ENCODE measurements at regions of chr10 and their contacts with region 1.

Region 1: GRCh38 chr10:80509403-80510161 is 28.1 kb upstream of the SH2D4B start:
- DNase-seq: no peak
- H3K4me3 ChIP-seq: no peak overlapping the region
- H3K27ac ChIP-seq: no peak overlapping the region
- H3K4me1 ChIP-seq: peaks cover 34% of the 10 kb centered on the region
- H3K27me3 ChIP-seq: no peaks in the 10 kb centered on the region
- CTCF ChIP-seq: no peak

Region 2: DNA sequence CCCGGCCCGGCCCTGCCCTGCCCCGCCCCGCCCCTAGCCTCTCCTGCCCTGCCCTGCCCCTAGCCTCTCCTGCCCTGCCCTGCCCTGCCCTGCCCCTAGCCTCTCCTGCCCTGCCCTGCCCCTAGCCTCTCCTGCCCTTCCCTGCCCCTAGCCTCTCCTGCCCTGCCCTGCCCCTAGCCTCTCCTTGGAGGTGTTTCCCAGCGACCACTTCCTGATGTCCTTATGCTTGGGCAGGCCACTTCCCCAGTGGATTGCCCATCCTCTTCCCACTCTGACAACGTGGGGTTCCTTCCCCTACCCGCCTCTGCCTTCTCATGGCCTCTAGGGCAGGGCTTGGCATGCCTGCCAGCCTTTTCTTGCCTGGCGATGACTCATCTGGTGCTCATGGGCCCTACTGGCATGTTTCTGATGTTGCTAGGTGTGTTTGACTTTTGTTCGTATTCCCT is 80.0 kb before region 1 on chr10:
- CTCF ChIA-PET with region 1: no interaction called
- dilution Hi-C with region 1: loop called (anchors 5 kb)
- in situ Hi-C with region 1: no loop called
- intact Hi-C with region 1: no loop called
- DNase-seq: peak; percentile 92
- H3K4me3 ChIP-seq: no peak overlapping the region
- H3K27ac ChIP-seq: peak overlapping the region; percentile 65
- H3K4me1 ChIP-seq: peaks cover 14% of the 10 kb centered on the region
- H3K27me3 ChIP-seq: no peaks in the 10 kb centered on the region
- CTCF ChIP-seq: peak in 1 of 2 donors; percentile 18

Region 3: DNA sequence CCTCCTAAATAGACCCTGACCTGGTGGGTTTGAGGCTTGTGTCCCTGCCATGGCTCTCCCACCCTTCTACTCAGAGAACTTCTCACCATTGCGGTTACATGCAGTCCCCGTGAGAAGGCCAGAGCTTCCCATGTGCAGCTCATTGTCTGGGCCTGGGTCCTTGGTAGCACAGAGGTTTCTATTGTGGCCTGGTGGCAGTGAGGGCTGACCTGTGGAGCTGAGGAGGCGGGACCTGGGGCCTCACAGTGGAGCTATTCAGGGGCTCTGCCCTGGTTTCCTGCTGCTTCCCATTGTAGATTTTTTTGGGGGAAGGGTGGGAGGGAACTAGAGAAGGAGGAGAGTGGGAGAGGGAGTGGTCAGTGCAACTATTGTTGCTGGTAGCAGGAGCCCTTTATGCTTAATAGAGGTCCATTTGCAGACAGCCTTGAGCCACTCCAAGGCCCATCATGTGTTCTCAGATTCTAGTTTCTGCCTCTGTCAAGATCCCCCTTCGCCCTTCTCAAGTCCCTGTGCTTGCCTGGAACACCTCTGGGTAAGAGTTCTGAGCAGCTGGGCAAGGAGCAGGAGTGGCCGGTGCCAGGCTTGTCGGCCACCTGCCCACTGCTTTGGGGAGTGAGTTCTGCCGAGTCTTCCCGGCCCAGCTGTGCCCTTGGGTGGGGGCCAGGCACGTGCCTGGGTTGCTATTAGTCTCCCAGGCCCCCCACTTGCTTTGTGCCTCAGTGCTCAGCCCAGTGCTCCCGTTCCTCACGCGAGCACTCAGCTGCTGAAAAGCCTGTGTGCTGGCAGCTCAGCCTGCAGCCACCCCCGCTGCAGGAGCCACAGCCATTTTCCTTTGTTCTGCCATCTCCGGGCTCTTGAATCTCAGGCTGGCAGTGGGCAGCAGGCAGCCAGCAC is 44.8 kb before region 1 on chr10:
- CTCF ChIA-PET with region 1: interaction called, 13 read pairs
- dilution Hi-C with region 1: loop called (anchors 5 kb)
- in situ Hi-C with region 1: no loop called
- intact Hi-C with region 1: no loop called
- DNase-seq: no peak
- H3K4me3 ChIP-seq: peak overlapping the region in 1 of 3 experiments; percentile 17
- H3K27ac ChIP-seq: peak overlapping the region; percentile 17
- H3K4me1 ChIP-seq: peaks cover 87% of the 10 kb centered on the region
- H3K27me3 ChIP-seq: no peaks in the 10 kb centered on the region
- CTCF ChIP-seq: no peak

Region 4: GRCh38 chr10:80552151-80552646 is 42.6 kb after region 1 on chr10:
- CTCF ChIA-PET with region 1: no interaction called
- dilution Hi-C with region 1: loop called (anchors 5 kb)
- in situ Hi-C with region 1: no loop called
- intact Hi-C with region 1: no loop called
- DNase-seq: no peak
- H3K4me3 ChIP-seq: no peak overlapping the region
- H3K27ac ChIP-seq: no peak overlapping the region
- H3K4me1 ChIP-seq: no peaks in the 10 kb centered on the region
- H3K27me3 ChIP-seq: no peaks in the 10 kb centered on the region
- CTCF ChIP-seq: no peak

Region 5: GRCh38 chr10:80908611-80909010 is 399.0 kb after region 1 on chr10:
- CTCF ChIA-PET with region 1: no interaction called
- dilution Hi-C with region 1: no loop called
- in situ Hi-C with region 1: no loop called
- intact Hi-C with region 1: no loop called
- DNase-seq: no peak
- H3K4me3 ChIP-seq: no peak overlapping the region
- H3K27ac ChIP-seq: no peak overlapping the region
- H3K4me1 ChIP-seq: no peaks in the 10 kb centered on the region
- H3K27me3 ChIP-seq: no peaks in the 10 kb centered on the region
- CTCF ChIP-seq: no peak